Thyroid gland (tissue), 4 donors: ENCODE measurements at regions of chr1 and their contacts with region 1.

Region 1: GRCh38 chr1:19582302-19582701 is 61.8 kb upstream of the NBL1 start:
- DNase-seq: peak; percentile 77 to 83
- H3K4me3 ChIP-seq: no peak overlapping the region
- H3K27ac ChIP-seq: no peak overlapping the region
- H3K4me1 ChIP-seq: peaks cover 0 to 7% of the 10 kb centered on the region in 2 donors
- H3K27me3 ChIP-seq: no peaks in the 10 kb centered on the region
- CTCF ChIP-seq: peak in 5 of 6 experiments; percentile 48 to 77 (median 73)
- POLR2A ChIP-seq: no peak

Region 2: GRCh38 chr1:19341201-19342072 is 240.9 kb before region 1 on chr1:
- intact Hi-C with region 1: loop called (anchors 10 kb)
- DNase-seq: peak; percentile 71 to 79
- H3K4me3 ChIP-seq: no peak overlapping the region
- H3K27ac ChIP-seq: no peak overlapping the region
- H3K4me1 ChIP-seq: peaks cover 0 to 6% of the 10 kb centered on the region in 2 donors
- H3K27me3 ChIP-seq: no peaks in the 10 kb centered on the region
- CTCF ChIP-seq: peak; percentile 67 to 93 (median 80)
- POLR2A ChIP-seq: no peak

Region 3: DNA sequence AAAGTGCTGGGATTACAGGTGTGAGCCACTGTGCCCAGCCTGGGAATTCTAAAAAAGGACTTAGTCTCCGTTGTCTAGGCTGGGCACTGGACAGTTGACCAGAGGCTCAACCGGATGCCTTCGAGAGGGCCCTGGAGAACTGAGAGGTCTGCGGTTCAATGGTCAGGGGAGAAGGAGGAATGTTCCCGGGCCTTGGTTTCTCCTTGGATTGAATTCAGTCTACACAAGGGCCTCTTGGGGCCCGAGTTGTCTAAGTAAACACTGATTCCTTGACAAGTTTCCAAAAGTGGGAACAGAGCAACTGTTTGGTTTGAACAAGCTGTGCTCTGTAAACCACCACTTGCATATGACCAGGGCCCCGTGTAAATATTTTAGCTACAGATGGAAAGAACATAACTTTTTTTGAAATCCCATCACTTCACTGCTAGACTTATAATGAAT is 67.9 kb before region 1 on chr1:
- intact Hi-C with region 1: no loop called
- DNase-seq: peak; percentile 92 to 93
- H3K4me3 ChIP-seq: no peak overlapping the region
- H3K27ac ChIP-seq: peak overlapping the region; percentile 77 to 89 (median 89)
- H3K4me1 ChIP-seq: peaks cover 29 to 36% of the 10 kb centered on the region in 2 donors
- H3K27me3 ChIP-seq: no peaks in the 10 kb centered on the region
- CTCF ChIP-seq: no peak
- POLR2A ChIP-seq: no peak

Region 4: DNA sequence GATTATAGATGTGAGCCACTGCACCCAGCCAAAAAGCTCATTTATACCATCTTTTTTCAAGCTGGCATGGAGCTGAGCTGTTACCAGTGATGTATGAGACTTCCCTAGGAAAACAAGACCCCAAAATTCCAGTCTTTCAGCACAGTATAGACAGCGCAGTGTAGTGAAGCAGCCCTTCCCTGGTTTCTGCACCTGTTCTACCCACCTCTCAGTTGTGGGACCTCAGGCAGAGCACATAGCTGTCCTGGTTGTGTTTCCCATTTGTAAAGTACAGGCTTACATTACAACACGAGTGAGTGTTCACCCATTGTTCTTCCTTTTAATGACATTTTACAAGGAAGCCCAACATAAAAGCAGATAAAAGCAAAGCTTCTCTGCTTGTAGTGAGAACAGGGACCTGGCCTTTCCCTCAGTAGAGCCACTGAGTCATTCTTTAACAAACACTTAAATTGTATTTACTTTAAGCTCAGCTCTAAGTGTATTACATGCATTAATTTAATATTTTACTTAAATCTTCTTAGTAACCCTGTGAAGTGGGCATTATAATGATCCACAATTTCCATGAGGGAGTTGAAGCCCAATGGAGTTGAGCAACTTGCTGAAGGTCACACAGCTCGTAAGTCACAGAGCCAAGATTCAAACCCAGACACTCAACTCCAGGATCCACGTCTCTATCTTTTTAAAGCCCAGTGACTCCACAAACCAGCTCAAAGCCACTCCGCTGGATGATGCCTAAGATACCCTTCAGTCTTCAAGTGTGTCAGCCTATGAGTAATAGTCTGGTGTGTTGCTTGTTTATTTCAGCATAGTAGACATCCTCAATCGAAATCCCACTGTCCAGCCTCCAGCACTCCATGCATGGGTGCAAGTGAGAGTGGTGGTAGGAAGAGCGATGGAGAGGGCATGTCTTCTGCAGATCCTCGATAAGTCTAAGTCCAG is 56.4 kb before region 1 on chr1:
- intact Hi-C with region 1: no loop called
- DNase-seq: no peak
- H3K4me3 ChIP-seq: no peak overlapping the region
- H3K27ac ChIP-seq: no peak overlapping the region
- H3K4me1 ChIP-seq: no peaks in the 10 kb centered on the region
- H3K27me3 ChIP-seq: no peaks in the 10 kb centered on the region
- CTCF ChIP-seq: no peak
- POLR2A ChIP-seq: no peak

Region 5: DNA sequence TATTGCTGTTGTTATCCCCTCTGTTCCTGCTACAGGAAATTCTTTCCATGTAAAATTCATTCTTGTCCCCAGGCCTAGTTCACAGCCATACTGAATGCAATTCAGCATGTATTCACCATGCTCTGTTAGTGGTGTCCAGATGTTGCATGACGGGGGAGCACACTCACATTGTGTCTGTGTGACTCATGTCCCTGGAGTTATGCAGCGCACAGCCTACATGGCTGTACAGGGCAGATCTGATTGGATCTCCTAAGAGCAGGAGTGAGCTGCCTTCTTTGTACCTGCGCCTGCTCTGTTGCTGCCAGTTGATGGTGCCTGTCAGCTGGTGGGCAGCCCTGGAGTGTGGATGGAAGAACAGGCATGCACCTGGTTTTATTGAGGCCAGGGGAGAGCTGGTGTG is 100.0 kb after region 1 on chr1:
- intact Hi-C with region 1: no loop called
- DNase-seq: no peak
- H3K4me3 ChIP-seq: no peak overlapping the region
- H3K27ac ChIP-seq: no peak overlapping the region
- H3K4me1 ChIP-seq: no peaks in the 10 kb centered on the region
- H3K27me3 ChIP-seq: no peaks in the 10 kb centered on the region
- CTCF ChIP-seq: no peak
- POLR2A ChIP-seq: no peak

Region 6: GRCh38 chr1:19840228-19840627 is 257.9 kb after region 1 on chr1:
- intact Hi-C with region 1: no loop called
- DNase-seq: no peak
- H3K4me3 ChIP-seq: no peak overlapping the region
- H3K27ac ChIP-seq: no peak overlapping the region
- H3K4me1 ChIP-seq: peaks cover 4 to 5% of the 10 kb centered on the region in 2 donors
- H3K27me3 ChIP-seq: no peaks in the 10 kb centered on the region
- CTCF ChIP-seq: no peak
- POLR2A ChIP-seq: no peak